CD4-positive, alpha-beta T cell (primary cell): ENCODE measurements at regions of chr4 and their contacts with region 1.

Region 1: GRCh38 chr4:87103691-87104187 is 116.7 kb downstream of the KLHL8 start:
- DNase-seq: peak in 4 of 14 experiments; percentile 8 to 75 (median 70)
- ATAC-seq: peak; percentile 77
- H3K4me3 ChIP-seq: no peak overlapping the region
- H3K4me3 Mint-ChIP-seq: peak overlapping the region; percentile 78
- H3K27ac ChIP-seq: peak overlapping the region; percentile 78 to 88
- H3K27ac Mint-ChIP-seq: peak overlapping the region; percentile 93
- H3K4me1 ChIP-seq: peaks cover 16% of the 10 kb centered on the region
- H3K4me1 Mint-ChIP-seq: peaks cover 67% of the 10 kb centered on the region
- H3K27me3 ChIP-seq: no peaks in the 10 kb centered on the region
- H3K27me3 Mint-ChIP-seq: no peaks in the 10 kb centered on the region
- CTCF ChIP-seq: no peak

Region 2: DNA sequence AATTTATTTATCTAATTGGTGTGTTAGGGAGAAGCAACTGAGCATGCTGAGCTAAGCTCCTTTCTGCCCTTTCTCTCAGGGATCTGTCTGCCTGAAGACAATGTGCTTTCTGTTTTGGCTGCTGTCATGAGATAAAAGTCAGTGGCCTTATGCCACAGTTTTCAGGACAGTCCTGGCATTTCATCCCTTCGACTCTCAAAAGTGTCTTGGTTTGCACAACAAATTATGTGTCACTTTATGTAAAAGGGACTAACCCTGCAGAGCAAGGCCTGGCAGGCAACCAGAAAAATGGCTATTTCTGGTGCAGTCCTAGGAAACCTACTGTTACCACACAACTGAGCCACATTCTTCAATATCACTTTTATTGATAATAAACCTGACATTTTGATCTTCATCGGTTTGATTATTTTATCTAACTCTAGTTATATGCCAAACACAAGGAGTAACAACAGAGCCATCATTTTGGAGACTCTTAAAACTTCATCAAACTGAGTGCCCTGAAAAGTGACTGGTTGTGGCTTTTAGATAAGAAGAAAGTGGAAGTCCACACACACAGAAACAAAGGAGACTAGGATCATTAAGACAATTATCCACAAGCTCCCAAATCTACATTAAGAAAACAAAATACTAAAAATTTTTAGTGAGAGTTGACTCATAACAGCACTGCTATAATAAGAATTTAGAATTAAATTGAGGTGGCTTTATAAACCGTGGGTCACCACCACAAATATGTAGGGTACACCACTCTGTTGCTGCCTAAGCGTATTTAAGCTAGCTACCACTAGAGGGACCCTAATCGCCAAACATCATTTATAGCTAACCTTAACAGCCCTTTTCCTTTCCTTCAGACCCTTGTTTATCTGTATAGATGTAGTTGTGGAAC is 605.5 kb before region 1 on chr4:
- CTCF ChIA-PET with region 1: no interaction called
- POLR2A ChIA-PET with region 1: no interaction called
- intact Hi-C with region 1: loop called in 1 of 2 experiments (anchors 5 kb)
- DNase-seq: peak in 3 of 14 experiments; percentile 27 to 56 (median 52)
- ATAC-seq: peak; percentile 48
- H3K4me3 ChIP-seq: no peak overlapping the region
- H3K4me3 Mint-ChIP-seq: no peak overlapping the region
- H3K27ac ChIP-seq: no peak overlapping the region
- H3K27ac Mint-ChIP-seq: no peak overlapping the region
- H3K4me1 ChIP-seq: no peaks in the 10 kb centered on the region
- H3K4me1 Mint-ChIP-seq: no peaks in the 10 kb centered on the region
- H3K27me3 ChIP-seq: no peaks in the 10 kb centered on the region
- H3K27me3 Mint-ChIP-seq: peaks cover 11% of the 10 kb centered on the region
- CTCF ChIP-seq: peak; percentile 84

Region 3: DNA sequence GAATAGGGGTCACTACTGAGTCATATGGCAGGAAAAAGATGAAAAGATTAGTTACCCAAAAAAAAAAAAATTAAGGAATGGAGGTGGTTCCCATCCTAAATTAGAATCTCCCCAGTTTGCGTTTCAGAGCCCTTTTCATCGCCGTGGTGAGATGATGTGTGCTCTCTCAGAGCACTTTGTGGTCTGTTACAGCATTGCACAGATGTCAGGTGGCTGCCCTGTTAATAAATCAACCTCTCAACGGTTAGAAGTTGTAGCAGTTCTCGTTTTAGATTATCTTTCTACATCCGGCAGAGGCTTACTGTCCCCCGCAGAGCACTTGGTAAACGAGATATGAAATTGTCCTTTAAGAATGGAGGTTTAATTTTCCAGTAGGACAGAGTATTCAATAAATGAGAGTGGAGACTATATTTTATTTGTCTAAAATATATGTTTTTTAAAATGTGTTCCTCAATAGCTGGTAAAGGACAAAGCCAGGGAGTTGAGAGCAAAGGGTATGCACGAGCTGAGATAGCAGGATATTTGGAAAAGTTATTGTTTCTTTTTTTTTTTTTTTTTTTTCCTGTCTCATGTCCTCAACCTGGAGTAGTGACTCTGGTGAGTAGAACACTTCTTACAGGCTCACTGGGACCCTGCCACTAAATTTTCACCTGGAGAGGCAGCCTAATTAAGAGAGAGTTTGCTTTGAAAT is 142.0 kb before region 1 on chr4:
- CTCF ChIA-PET with region 1: no interaction called
- POLR2A ChIA-PET with region 1: no interaction called
- intact Hi-C with region 1: no loop called
- DNase-seq: peak in 2 of 14 experiments; percentile 25 to 33
- ATAC-seq: peak; percentile 78
- H3K4me3 ChIP-seq: no peak overlapping the region
- H3K4me3 Mint-ChIP-seq: peak overlapping the region; percentile 3
- H3K27ac ChIP-seq: no peak overlapping the region
- H3K27ac Mint-ChIP-seq: no peak overlapping the region
- H3K4me1 ChIP-seq: no peaks in the 10 kb centered on the region
- H3K4me1 Mint-ChIP-seq: peaks cover 51% of the 10 kb centered on the region
- H3K27me3 ChIP-seq: no peaks in the 10 kb centered on the region
- H3K27me3 Mint-ChIP-seq: no peaks in the 10 kb centered on the region
- CTCF ChIP-seq: no peak

Region 4: DNA sequence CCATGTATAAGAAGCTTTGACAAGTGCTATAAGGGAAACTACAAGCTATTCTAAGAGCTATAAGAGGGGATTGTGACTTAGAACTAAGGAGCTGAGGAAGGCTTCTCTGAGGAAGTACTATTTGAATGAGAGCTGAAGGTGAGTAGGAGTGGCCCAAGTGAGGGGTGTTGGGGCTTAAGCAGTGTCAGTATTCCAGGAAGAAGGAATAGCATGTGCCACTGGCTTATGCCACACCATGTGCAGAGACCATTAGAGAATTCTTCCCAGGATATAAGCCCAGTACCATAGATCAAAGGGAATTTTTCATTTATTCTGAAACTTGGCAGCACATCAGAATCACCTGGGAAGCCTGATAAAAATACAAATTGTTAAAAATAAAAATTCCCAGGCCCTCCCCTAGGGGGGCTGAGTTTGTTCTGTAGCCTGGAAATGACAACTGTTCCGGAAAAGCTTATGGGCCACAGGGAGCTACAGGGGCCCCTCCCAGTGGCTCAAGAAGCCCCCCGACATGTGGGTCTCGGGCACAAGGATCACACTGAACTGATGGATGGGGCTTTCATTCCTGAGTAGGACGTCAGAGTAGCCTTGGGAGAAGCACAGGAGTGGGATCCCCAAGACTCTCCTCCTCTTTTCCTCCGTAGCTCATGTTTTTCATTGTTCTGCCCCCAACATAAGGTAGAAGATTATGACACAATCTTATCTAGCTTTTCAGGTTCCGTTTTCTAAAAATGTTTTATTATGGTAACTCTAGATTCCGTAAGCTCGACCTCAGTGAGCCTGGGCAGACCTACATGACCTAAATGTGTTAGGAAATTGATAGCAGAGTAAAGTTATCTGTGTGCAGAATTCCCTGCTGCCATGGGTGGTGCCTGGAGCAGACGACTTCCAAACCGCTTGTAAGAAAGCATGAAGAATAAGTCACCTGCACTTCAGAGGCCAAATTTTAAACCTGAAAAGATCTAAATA is 49.7 kb before region 1 on chr4:
- CTCF ChIA-PET with region 1: no interaction called
- POLR2A ChIA-PET with region 1: no interaction called
- intact Hi-C with region 1: no loop called
- DNase-seq: no peak
- ATAC-seq: no peak
- H3K4me3 ChIP-seq: no peak overlapping the region
- H3K4me3 Mint-ChIP-seq: no peak overlapping the region
- H3K27ac ChIP-seq: no peak overlapping the region
- H3K27ac Mint-ChIP-seq: no peak overlapping the region
- H3K4me1 ChIP-seq: peaks cover 15% of the 10 kb centered on the region
- H3K4me1 Mint-ChIP-seq: peaks cover 83% of the 10 kb centered on the region
- H3K27me3 ChIP-seq: no peaks in the 10 kb centered on the region
- H3K27me3 Mint-ChIP-seq: no peaks in the 10 kb centered on the region
- CTCF ChIP-seq: no peak

Region 5: DNA sequence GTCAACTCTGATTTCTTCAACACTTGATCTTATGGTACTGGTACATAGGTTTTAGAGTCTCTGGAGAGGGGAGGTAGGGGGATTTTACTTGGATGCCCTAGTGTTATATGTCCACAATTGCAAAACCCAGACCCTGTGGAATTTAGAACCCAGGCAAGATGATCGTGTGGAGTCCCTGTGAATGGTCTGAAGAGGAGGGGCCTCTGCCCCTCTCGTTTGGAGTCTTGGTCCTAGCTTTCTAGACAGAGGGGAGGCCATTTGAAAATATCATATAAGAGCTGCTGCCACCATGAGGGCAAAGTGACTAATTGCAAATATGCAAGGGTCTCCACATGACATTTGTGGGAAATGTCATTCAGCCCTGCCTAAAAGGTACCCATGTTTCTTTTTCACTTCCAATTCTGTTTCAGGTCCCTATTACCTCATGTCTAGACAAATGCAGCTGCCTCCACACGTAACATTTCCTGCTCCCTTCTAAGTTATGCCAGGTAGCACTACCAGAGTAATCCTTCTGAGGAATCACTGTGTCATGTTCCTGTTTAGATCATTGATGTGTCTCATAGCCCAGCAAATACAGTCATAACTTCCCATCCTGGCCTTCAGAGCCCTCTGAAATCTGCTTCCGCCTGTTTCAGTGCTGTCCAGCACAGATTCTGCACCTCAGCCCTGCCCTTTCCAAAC is 10.2 kb before region 1 on chr4:
- CTCF ChIA-PET with region 1: interaction called, 12 read pairs
- POLR2A ChIA-PET with region 1: interaction called, 4 read pairs
- intact Hi-C with region 1: no loop called
- DNase-seq: peak in 13 of 14 experiments; percentile 5 to 74 (median 30)
- ATAC-seq: peak; percentile 84
- H3K4me3 ChIP-seq: no peak overlapping the region
- H3K4me3 Mint-ChIP-seq: no peak overlapping the region
- H3K27ac ChIP-seq: no peak overlapping the region
- H3K27ac Mint-ChIP-seq: peak overlapping the region; percentile 74
- H3K4me1 ChIP-seq: peaks cover 5% of the 10 kb centered on the region
- H3K4me1 Mint-ChIP-seq: peaks cover 20% of the 10 kb centered on the region
- H3K27me3 ChIP-seq: no peaks in the 10 kb centered on the region
- H3K27me3 Mint-ChIP-seq: no peaks in the 10 kb centered on the region
- CTCF ChIP-seq: peak; percentile 72